ENCODE measurements at regions of chr11 and their contacts with region 1.

Region 1: GRCh38 chr11:62905927-62906531 is 15.1 kb downstream of the CHRM1 start:
- DNase-seq: peak; percentile 70 to 89 (median 85)
- H3K4me3 ChIP-seq: no peak overlapping the region
- H3K27ac ChIP-seq: peak overlapping the region in 1 of 2 donors; percentile 61
- H3K4me1 ChIP-seq: no peaks in the 10 kb centered on the region
- H3K27me3 ChIP-seq: no peaks in the 10 kb centered on the region
- CTCF ChIP-seq: peak; percentile 93 to 96 (median 94)
- EP300 ChIP-seq: no peak
- POLR2A ChIP-seq: no peak

Region 2: DNA sequence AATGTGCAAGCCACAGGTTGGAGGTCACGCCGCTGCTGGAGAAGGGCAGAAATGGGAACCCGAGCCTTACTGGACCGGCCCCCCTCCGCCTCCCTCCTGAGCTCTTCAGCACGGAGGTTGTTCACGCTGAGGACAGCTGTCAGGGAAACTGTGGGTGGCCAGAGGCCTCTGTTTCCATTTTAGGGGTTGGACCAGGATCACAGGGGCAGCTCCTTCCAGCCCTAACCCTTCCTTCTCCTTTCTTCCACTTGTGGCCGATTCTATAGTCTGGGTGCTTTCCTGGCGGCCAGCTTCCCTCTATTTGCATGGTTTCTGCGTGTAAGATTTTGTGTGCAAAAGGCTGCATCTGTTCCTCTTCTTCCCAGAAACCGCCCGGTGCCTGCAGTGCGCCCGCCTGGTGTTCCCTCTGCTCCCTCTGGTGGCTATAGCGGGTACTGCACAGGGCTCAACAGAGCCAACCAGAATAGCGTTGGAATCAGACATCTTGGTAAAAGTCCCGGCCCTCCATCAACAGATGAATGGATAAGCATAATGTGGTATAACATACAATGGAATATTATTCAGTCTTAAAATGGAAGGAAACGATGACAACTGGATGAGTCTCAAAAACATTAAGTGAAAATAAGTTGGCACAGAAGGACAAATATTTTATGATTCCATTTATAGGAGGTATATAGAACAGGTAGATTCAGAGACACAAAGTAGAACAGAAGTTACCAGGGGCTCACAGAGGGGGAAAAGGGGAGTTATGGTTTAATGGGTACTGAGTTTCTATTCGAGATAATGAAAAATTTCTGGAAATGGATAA is 118.0 kb after region 1 on chr11:
- intact Hi-C with region 1: loop called (anchors 1 to 2 kb)
- DNase-seq: peak; percentile 78 to 91 (median 87)
- H3K4me3 ChIP-seq: no peak overlapping the region
- H3K27ac ChIP-seq: no peak overlapping the region
- H3K4me1 ChIP-seq: peaks cover 1% of the 10 kb centered on the region
- H3K27me3 ChIP-seq: no peaks in the 10 kb centered on the region
- CTCF ChIP-seq: peak; percentile 86 to 96 (median 93)
- EP300 ChIP-seq: no peak
- POLR2A ChIP-seq: no peak

Measured in ovary (tissue), 10 donors.